ENCODE measurements at regions of chr2 and their contacts with region 1.

Region 1: DNA sequence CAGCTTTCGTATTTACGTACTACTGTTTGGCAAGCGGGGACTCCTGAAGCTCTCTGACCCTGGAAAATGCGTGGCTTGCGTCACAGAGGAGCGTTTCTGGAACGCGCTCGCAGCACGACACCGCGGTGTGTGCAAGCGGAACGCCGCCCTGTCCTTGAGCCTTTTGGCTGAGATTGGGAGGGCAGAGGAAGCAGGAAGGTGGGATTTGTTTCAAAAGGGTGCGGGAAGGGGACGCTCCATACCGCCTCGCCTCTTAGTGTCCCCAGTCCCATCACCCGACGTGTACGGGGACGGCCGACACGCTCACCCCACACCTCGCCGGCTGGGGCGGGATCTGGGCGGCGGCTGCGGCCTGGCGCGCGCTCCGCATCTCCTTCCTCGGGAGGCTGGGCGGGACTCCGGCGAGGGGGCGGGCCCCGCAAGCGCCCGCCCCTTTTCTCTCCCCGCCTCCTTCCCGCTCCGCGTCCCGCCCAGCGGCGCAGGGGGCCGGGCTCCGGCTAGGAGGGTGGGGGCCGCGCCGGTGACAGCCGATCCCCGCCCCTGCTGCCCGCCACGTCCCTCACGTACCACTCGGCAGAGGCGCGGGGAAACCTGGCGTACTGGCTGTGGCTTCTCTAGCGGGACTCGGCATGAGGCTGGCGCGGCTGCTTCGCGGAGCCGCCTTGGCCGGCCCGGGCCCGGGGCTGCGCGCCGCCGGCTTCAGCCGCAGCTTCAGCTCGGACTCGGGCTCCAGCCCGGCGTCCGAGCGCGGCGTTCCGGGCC is at the start of gene PDK1:
- DNase-seq: peak; percentile 95
- ATAC-seq: peak; percentile 92
- H3K4me3 Mint-ChIP-seq: peak within 1 kb of the TSS; percentile 95
- H3K27ac Mint-ChIP-seq: peak within 1 kb of the TSS; percentile 93
- H3K4me1 Mint-ChIP-seq: peaks cover 35% of the 10 kb centered on the region
- H3K27me3 Mint-ChIP-seq: no peaks in the 10 kb centered on the region
- CTCF ChIP-seq: no peak
- total RNA-seq, gene PDK1: 14.8 and 16.3 TPM in 2 replicates

Region 2: DNA sequence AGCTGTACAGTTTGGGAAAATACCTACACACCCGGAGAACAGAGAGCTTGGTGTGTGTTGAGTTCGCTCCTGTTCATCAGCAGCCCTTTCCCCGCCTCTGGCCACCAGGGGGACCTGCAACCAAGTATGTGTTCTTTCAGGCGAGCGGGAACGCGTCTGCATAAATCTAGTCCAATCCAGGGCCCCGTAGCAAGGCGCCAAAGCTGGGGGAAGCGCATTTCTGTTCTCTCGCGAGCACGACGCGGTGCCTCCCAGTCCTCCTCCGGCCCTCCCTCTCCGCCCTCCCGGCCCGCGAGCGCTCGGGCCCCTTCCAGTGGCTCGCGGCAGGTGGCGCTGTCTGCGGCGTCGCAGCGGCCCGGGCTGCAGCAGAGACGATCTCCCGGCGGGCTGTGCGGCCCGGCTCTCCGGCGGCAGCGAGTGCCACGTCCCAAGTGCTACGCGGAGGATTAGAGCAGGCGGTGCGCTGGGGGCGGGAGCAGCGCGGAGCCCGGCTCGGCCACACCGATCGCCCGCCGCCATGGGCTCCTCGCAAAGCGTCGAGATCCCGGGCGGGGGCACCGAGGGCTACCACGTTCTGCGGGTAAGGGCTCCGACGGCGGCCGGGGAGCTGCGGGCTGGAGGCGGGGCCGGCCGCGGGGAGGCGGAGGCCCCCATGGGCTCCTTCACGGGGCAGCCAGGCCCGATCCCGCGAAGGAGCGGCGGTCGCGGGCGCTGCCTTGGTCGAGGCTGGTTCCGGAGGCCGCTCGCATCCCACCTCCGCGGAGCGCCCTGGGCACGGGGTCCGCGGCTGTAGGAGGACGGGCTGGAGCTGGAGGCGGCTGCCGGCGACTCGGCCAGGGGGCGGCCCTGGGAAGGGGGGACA is 1626.6 kb before region 1 on chr2 and contains the start of gene GORASP2:
- CTCF ChIA-PET with region 1: no interaction called
- POLR2A ChIA-PET with region 1: no interaction called
- intact Hi-C with region 1: loop called (anchors 2 kb)
- DNase-seq: peak; percentile 96
- ATAC-seq: peak; percentile 93
- H3K4me3 Mint-ChIP-seq: peak within 1 kb of the TSS; percentile 90
- H3K27ac Mint-ChIP-seq: peak within 1 kb of the TSS; percentile 88
- H3K4me1 Mint-ChIP-seq: peaks cover 38% of the 10 kb centered on the region
- H3K27me3 Mint-ChIP-seq: no peaks in the 10 kb centered on the region
- CTCF ChIP-seq: peak; percentile 75
- total RNA-seq, gene GORASP2: 60.7 and 69.7 TPM in 2 replicates

Region 3: GRCh38 chr2:171433763-171434670 is 1121.7 kb before region 1 on chr2 and contains the starts of genes DCAF17 and METTL8:
- CTCF ChIA-PET with region 1: no interaction called
- POLR2A ChIA-PET with region 1: no interaction called
- intact Hi-C with region 1: loop called (anchors 5 kb)
- DNase-seq: peak; percentile 91
- ATAC-seq: peak; percentile 92
- H3K4me3 Mint-ChIP-seq: peak within 1 kb of the TSS; percentile 90
- H3K27ac Mint-ChIP-seq: peak within 1 kb of the TSS; percentile 94
- H3K4me1 Mint-ChIP-seq: peaks cover 24% of the 10 kb centered on the region
- H3K27me3 Mint-ChIP-seq: no peaks in the 10 kb centered on the region
- CTCF ChIP-seq: no peak
- total RNA-seq, gene DCAF17: 23.1 and 23.5 TPM in 2 replicates
- total RNA-seq, gene METTL8: 16.5 and 22.9 TPM in 2 replicates

Region 4: GRCh38 chr2:171922230-171923022 is 633.3 kb before region 1 on chr2 and contains the start of gene HAT1:
- CTCF ChIA-PET with region 1: no interaction called
- POLR2A ChIA-PET with region 1: no interaction called
- intact Hi-C with region 1: loop called (anchors 1 kb)
- DNase-seq: peak; percentile 94
- ATAC-seq: peak; percentile 97
- H3K4me3 Mint-ChIP-seq: peak within 1 kb of the TSS; percentile 100
- H3K27ac Mint-ChIP-seq: peak within 1 kb of the TSS; percentile 99
- H3K4me1 Mint-ChIP-seq: peaks cover 33% of the 10 kb centered on the region
- H3K27me3 Mint-ChIP-seq: no peaks in the 10 kb centered on the region
- CTCF ChIP-seq: no peak
- total RNA-seq, gene HAT1: 35.9 and 36.2 TPM in 2 replicates

Region 5: GRCh38 chr2:172434821-172435605 is 120.7 kb before region 1 on chr2:
- CTCF ChIA-PET with region 1: no interaction called
- POLR2A ChIA-PET with region 1: no interaction called
- intact Hi-C with region 1: loop called (anchors 5 kb)
- DNase-seq: no peak
- ATAC-seq: no peak
- H3K4me3 Mint-ChIP-seq: no peak overlapping the region
- H3K27ac Mint-ChIP-seq: no peak overlapping the region
- H3K4me1 Mint-ChIP-seq: peaks cover 7% of the 10 kb centered on the region
- H3K27me3 Mint-ChIP-seq: peaks cover 15% of the 10 kb centered on the region
- CTCF ChIP-seq: no peak

Region 6: DNA sequence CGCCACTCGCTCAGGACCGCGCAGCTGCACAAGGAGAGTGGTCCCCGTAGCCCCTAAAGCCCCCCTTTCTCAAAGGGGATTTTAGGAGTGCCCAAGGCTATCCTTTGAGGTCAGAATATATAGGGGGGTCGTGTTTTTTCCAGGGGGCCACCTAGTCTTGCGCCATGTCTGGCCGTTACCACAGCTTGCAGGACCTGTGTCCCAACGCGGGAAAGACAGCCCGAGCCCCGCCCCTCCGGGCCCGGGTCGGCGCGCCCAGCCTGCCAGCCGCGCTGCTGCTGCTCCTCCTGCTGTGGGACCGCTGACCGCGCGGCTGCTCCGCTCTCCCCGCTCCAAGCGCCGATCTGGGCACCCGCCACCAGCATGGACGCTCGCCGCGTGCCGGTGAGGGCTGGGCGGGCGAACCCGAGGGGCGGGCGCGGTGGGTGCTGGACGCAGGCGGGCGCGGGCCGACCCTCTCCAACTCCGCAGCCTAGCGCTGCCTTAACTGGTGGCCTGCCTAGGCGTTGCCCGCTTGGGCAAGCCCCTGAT is 799.0 kb after region 1 on chr2 and contains the start of gene CDCA7:
- CTCF ChIA-PET with region 1: no interaction called
- POLR2A ChIA-PET with region 1: no interaction called
- intact Hi-C with region 1: loop called (anchors 10 kb)
- DNase-seq: peak; percentile 49
- ATAC-seq: peak; percentile 72
- H3K4me3 Mint-ChIP-seq: peak within 1 kb of the TSS; percentile 87
- H3K27ac Mint-ChIP-seq: no peak within 1 kb of the TSS
- H3K4me1 Mint-ChIP-seq: peaks cover 29% of the 10 kb centered on the region
- H3K27me3 Mint-ChIP-seq: peaks cover 22% of the 10 kb centered on the region
- CTCF ChIP-seq: no peak
- total RNA-seq, gene CDCA7: 4.9 and 6.3 TPM in 2 replicates

Region 7: GRCh38 chr2:174395284-174395968 is 1839.7 kb after region 1 on chr2 and contains the start of gene SCRN3:
- CTCF ChIA-PET with region 1: no interaction called
- POLR2A ChIA-PET with region 1: no interaction called
- intact Hi-C with region 1: loop called (anchors 5 kb)
- DNase-seq: peak; percentile 59
- ATAC-seq: peak; percentile 94
- H3K4me3 Mint-ChIP-seq: peak within 1 kb of the TSS; percentile 100
- H3K27ac Mint-ChIP-seq: peak within 1 kb of the TSS; percentile 98
- H3K4me1 Mint-ChIP-seq: peaks cover 34% of the 10 kb centered on the region
- H3K27me3 Mint-ChIP-seq: no peaks in the 10 kb centered on the region
- CTCF ChIP-seq: no peak
- total RNA-seq, gene SCRN3: 14.3 and 19.4 TPM in 2 replicates

Measured in activated B cell treated with CpG ODN at 0.5 μM for 24 hours (primary cell).